ENCODE measurements at regions of chr3 and their contacts with region 1.

Region 1: DNA sequence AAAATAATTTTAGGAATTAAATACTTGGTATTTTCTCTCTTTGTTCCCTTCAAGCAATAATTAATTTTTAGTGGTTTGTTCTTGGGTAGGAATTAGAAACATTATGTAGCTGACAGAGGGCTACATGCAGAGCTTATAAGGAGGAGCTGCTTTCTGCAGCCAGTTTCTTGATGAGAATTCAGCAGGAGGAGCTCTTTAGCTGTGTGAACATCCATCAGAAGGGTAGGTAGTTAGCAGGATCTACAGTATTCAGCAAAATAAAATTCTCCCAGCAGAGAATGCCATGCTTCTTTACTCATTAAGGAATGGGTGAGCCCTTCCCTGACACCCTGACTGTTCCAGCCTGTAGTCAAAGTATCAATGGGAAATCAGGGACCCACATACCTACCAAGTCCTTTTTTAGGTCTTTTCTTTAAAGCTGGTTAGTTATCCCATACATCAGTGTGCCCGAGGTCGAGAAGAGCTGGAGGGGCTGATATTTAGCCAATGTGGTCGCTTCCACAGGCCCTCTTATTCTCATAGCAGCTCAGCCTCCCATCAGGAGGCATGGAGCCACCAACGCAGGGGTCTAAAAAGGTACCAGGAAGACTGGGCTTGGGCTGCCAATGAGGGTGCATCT is 54.0 kb downstream of the KCNAB1 start:
- DNase-seq: no peak
- H3K4me3 ChIP-seq: no peak overlapping the region
- CTCF ChIP-seq: peak; percentile 59

Region 2: DNA sequence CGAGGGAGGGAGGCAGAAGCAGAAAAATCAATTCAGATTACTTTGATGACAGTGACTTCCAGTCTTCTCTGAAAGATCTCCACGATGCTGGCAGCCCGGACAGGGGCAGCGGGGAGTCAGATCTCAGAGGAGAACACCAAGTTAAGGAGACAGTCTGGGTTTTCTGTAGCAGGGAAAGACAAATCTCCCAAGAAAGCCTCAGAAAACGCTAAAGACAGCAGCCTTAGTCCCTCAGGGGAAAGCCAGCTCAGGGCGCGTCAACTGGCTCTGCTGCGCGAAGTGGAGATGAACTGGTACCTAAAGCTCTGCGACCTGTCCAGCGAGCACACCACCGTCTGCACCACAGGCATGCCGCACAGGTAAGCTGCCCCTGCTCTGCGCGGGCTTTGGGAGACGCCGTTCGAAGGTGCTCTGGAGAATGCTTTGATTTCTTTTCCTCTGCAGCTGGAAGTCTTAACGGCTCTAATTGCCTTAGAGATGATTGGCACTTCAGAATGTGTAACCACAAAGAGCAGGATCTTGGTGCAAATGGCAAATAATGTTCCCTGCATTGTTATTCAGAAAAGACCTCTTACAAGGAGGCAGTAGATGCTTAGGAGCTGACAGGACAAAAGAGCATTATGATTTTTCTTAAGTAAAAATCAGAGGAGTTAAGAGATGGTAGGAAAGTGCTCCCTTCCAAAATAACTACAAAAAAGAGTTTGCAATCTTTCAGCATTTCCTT is 53.6 kb before region 1 on chr3 and contains the start of gene KCNAB1:
- CTCF ChIA-PET with region 1: no interaction called
- POLR2A ChIA-PET with region 1: no interaction called
- DNase-seq: no peak
- H3K4me3 ChIP-seq: no peak within 1 kb of the TSS
- CTCF ChIP-seq: no peak

Region 3: DNA sequence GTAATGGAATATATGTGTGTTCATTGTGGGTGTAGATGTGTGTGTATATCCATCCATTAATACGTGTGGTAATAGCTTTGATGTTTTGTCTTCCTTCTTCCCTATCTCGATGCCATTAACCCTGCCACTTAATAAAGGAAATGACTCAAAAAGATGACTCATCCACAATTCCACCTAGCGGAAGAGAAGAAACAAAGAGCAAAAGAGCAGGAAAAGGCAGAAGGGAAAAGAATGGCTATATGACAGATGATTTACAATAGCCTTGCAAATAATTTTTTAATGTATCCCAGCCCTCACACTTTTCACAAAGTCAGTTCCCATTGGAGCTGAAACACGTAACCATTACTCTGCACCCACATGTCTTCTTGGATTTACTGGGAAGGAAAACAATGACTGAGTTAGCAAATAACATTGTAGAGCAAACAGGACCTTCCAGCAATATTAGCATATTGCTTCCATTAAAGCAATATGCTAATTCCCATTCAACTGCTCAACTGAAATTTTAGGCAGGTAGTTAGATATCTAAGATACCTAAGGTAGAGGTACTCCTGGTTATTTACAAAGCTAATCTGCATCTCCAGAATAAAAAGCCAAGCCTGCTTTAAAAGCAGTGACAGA is 143.2 kb after region 1 on chr3:
- CTCF ChIA-PET with region 1: no interaction called
- POLR2A ChIA-PET with region 1: no interaction called
- DNase-seq: no peak
- H3K4me3 ChIP-seq: no peak overlapping the region
- CTCF ChIP-seq: no peak

Region 4: DNA sequence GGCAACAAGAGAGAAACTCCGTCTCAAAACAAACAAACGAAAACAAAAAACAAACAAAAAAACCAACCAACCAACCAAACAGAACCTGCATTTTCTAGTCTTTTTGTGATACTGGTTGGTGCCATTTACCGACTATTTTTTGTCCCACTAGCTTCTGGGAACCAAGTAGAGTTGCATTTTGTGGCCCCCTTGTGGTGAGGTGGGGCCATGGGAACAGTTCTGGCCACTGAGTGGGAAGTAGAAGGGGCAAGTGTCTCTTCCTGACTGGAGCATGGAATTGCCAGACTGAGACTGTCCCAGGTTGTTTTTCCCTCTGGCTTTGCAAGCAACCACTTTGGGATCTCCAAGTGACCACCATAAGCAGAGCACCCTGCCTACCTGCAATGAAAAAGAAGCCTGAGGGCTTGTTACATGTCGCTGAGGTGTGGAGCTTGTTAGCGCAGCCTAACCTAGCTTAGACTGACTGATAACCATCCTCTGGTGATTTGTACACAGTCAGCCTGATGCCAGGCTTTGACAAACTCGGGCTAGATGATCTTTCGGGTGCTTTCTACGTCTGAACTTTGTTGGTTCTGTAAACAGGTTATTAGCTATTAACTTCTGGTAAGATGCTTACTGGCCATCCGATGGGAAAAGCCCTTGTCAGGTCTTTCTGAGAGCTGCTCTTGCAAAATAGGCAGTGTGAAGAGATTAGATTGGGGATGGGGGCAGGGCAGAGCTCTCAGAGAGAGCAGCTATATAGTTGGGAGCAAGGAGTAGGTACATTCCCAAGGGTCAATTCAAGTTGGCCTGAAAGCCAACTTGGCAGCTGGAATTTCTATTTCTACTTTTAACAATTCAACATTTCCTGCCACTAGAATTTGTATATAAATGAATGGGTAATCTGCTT is 208.4 kb after region 1 on chr3:
- CTCF ChIA-PET with region 1: interaction called, 26 read pairs
- POLR2A ChIA-PET with region 1: no interaction called
- DNase-seq: no peak
- H3K4me3 ChIP-seq: no peak overlapping the region
- CTCF ChIP-seq: peak; percentile 58

Region 5: GRCh38 chr3:156469456-156469855 is 295.1 kb after region 1 on chr3:
- CTCF ChIA-PET with region 1: interaction called, 13 read pairs
- POLR2A ChIA-PET with region 1: no interaction called
- DNase-seq: no peak
- H3K4me3 ChIP-seq: no peak overlapping the region
- CTCF ChIP-seq: no peak

Region 6: DNA sequence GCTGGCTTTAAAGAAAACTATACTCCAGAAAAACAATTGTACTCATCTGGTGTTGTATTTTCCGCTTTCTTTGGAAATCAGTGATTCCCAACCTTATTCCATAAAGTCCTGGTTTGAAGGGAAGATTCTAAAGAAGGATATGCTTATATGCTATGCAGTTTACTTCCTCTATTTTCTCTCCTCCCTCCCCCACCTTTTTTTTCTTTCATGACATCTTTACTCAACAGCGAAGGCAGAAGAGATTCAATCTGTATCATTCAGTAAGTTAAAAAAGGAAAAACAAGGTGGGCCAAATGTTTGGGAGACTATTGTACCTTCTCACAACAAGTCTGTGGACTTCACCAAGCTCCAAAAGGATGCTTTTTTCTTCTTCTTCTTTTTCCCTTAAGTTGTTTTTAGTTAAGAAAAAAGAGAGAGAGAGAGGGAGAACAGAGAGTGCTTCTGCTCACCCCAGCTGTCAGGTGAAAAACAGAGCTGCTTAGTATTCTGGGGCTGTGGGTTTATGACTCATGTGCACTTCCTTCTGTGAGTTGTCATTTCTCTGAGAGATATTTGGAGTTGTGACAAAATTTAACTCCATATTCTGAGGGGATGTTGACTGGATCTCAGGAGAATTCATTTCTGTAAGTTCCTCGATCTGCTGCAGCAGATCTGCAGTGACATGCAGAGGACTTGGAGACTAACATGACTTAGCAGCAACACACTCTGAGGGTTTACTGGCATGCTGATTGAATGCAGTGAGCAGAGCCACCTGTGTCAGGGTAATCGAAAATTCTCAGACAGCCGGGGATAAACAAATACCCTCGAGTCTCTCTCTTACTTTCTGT is 309.8 kb after region 1 on chr3:
- CTCF ChIA-PET with region 1: interaction called, 15 read pairs
- POLR2A ChIA-PET with region 1: no interaction called
- DNase-seq: no peak
- H3K4me3 ChIP-seq: no peak overlapping the region; the same call in 1 of the 2 replicates
- CTCF ChIP-seq: no peak

Region 7: DNA sequence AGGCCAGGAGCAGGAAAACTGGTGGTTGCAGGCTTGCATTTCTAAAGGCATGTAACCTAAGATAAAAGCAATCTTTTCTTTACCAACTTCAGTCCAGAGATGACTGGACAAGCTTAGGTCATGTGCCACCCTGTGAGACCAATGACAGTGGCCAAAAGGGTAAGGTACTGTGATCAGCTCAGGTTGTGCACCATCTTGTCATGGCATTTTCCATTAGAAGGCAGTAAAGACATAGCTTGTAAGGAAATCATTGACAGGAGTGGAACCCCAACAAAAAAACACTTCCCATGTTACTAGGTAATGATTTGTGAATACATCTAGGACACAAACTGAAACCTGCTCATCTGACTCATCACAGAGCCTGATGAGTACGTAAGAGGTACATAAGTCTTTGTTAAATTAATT is 345.4 kb after region 1 on chr3:
- CTCF ChIA-PET with region 1: interaction called, 25 read pairs
- POLR2A ChIA-PET with region 1: no interaction called
- DNase-seq: no peak
- H3K4me3 ChIP-seq: no peak overlapping the region
- CTCF ChIP-seq: no peak

Region 8: DNA sequence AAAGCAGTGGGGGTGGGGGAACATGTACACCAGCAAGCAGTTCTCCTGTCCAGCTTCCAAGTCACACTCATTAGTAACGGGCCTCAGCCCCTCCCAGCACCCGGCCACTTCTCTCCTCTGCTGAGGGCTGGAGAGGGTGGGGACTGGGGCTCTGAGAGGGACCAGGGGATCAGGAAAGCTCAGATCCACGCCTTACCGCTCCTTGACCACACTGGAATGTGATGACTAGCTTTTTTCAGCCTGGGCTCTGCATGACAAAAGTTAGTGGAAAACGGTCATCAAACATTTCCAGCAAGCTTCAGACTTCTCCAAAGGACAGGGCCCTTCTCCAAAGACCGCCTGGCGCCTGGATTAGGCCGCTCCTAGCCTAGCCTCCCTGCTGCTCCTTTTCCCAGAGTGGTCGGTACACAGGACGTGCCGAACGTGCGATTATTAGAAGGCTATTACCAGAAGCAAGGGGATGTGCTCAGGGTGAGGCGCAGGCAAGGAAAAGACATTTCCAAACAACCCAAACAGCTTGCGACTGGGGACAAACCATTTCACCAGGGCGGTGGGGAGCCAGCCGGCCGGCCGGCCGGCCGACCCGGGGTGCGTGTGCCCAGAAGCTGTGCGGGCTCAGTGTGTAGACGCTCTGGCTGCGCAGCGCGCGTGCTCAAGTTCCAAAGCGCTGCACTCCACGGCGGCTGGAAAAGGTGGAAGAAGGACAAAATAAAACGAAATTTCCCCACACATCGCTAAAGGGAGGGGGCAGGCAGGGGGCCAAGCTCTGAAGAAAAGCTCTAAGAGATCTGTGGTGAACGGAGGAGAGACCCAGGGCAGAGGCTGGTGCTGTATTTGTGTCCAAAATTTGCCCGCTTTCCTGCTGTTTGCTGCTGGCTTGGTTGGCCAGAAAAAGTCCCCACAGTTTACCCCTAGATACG is 431.6 kb after region 1 on chr3:
- CTCF ChIA-PET with region 1: no interaction called
- POLR2A ChIA-PET with region 1: no interaction called
- DNase-seq: no peak
- H3K4me3 ChIP-seq: peak overlapping the region; percentile 44
- CTCF ChIP-seq: no peak

Region 9: GRCh38 chr3:157081681-157082210 is 907.4 kb after region 1 on chr3:
- CTCF ChIA-PET with region 1: interaction called, 10 read pairs
- POLR2A ChIA-PET with region 1: no interaction called
- DNase-seq: peak; percentile 60
- H3K4me3 ChIP-seq: no peak overlapping the region
- CTCF ChIP-seq: peak; percentile 96